ENCODE measurements at regions of chr14 and their contacts with region 1.

Region 1: GRCh38 chr14:103104654-103105452 is 10.3 kb downstream of the EXOC3L4 start:
- DNase-seq: peak; percentile 85
- ATAC-seq: peak; percentile 82
- H3K4me3 Mint-ChIP-seq: no peak overlapping the region
- H3K27ac Mint-ChIP-seq: no peak overlapping the region
- H3K4me1 Mint-ChIP-seq: peaks cover 10% of the 10 kb centered on the region
- H3K27me3 Mint-ChIP-seq: peaks cover 27% of the 10 kb centered on the region

Region 2: DNA sequence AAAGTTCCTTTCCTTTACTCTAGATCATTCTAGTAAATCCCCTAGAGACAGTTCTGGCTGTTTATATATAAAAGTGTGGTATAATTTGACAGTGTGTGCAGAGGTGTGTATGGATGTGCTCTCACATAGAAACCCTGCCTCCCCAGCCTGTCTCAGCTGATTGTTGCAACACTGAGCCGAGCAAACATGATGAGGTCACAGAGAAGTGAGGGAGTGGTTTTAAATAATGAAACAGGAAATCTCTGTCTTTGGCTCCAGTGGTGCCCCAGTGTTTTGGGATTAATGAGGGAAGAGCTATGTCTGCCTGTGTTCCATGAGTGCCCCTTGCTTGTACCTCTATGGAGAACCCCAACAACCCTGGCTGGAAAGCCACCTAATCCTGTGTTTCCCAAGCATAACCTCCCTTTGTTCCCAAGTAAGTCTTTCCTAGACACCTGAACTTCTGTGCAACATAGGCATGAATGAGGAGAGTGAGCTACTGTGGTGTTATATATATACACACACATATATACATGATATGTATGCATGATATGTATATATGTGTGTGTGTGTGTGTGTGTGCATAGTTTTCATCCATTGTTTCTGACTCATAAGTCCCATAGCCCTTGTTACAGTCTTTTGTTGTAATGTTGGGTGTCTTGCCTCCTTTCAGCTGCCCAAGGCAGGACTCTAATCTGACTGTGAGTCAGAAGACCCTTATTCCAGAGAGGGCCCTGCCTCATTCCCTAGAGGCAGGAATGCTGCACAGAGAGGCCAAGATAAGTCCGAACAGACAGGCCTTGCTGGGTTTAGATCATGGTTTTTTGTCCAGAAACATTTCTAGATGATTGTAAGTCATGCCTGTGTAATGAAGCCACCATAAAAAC is 309.6 kb before region 1 on chr14:
- CTCF ChIA-PET with region 1: no interaction called
- POLR2A ChIA-PET with region 1: no interaction called
- intact Hi-C with region 1: no loop called
- DNase-seq: peak; percentile 67
- ATAC-seq: peak; percentile 80
- H3K4me3 Mint-ChIP-seq: no peak overlapping the region
- H3K27ac Mint-ChIP-seq: peak overlapping the region; percentile 72
- H3K4me1 Mint-ChIP-seq: peaks cover 84% of the 10 kb centered on the region
- H3K27me3 Mint-ChIP-seq: no peaks in the 10 kb centered on the region

Region 3: GRCh38 chr14:103091041-103091882 is 13.6 kb before region 1 on chr14:
- CTCF ChIA-PET with region 1: interaction called, 23 read pairs
- POLR2A ChIA-PET with region 1: interaction called, 4 read pairs
- intact Hi-C with region 1: no loop called
- DNase-seq: peak; percentile 88
- ATAC-seq: peak; percentile 91
- H3K4me3 Mint-ChIP-seq: peak overlapping the region; percentile 12
- H3K27ac Mint-ChIP-seq: no peak overlapping the region
- H3K4me1 Mint-ChIP-seq: peaks cover 3% of the 10 kb centered on the region
- H3K27me3 Mint-ChIP-seq: no peaks in the 10 kb centered on the region

Region 4: GRCh38 chr14:103141119-103141796 is 36.4 kb after region 1 on chr14:
- CTCF ChIA-PET with region 1: interaction called, 13 read pairs
- POLR2A ChIA-PET with region 1: no interaction called
- intact Hi-C with region 1: loop called in 1 of 2 experiments (anchors 1 kb)
- DNase-seq: peak; percentile 72
- ATAC-seq: peak; percentile 51
- H3K4me3 Mint-ChIP-seq: no peak overlapping the region
- H3K27ac Mint-ChIP-seq: no peak overlapping the region
- H3K4me1 Mint-ChIP-seq: no peaks in the 10 kb centered on the region
- H3K27me3 Mint-ChIP-seq: peaks cover 35% of the 10 kb centered on the region

Region 5: DNA sequence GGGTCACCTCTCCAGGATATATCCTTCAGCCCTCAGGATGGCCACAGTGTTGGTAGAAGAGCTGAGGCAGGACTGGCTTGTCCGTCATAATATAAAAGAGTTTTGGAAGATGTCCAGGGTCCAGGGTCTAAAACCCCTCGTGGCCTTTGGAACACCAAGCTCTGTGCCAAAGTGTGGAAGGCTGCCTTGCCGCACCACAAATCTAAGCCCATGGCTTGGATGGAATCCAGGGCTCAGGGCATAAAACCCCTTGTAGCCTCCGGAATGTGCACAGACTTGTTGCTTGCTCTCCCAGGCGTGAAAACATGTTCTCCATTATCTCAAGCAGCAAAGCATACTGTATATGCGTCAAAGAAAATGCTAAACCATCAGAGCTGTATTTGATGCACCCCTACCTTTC is 65.1 kb after region 1 on chr14:
- CTCF ChIA-PET with region 1: no interaction called
- POLR2A ChIA-PET with region 1: interaction called, 10 read pairs
- intact Hi-C with region 1: no loop called
- DNase-seq: no peak
- ATAC-seq: no peak
- H3K4me3 Mint-ChIP-seq: no peak overlapping the region
- H3K27ac Mint-ChIP-seq: no peak overlapping the region
- H3K4me1 Mint-ChIP-seq: no peaks in the 10 kb centered on the region
- H3K27me3 Mint-ChIP-seq: peaks cover 16% of the 10 kb centered on the region

Region 6: GRCh38 chr14:103185051-103185992 is 80.5 kb after region 1 on chr14:
- CTCF ChIA-PET with region 1: interaction called, 31 read pairs
- POLR2A ChIA-PET with region 1: no interaction called
- intact Hi-C with region 1: loop called (anchors 1 to 5 kb)
- DNase-seq: no peak
- ATAC-seq: no peak
- H3K4me3 Mint-ChIP-seq: no peak overlapping the region
- H3K27ac Mint-ChIP-seq: no peak overlapping the region
- H3K4me1 Mint-ChIP-seq: peaks cover 3% of the 10 kb centered on the region
- H3K27me3 Mint-ChIP-seq: peaks cover 40% of the 10 kb centered on the region

Region 7: GRCh38 chr14:103241531-103241930 is 136.7 kb after region 1 on chr14:
- CTCF ChIA-PET with region 1: no interaction called
- POLR2A ChIA-PET with region 1: no interaction called
- intact Hi-C with region 1: no loop called
- DNase-seq: no peak
- ATAC-seq: no peak
- H3K4me3 Mint-ChIP-seq: no peak overlapping the region
- H3K27ac Mint-ChIP-seq: no peak overlapping the region
- H3K4me1 Mint-ChIP-seq: no peaks in the 10 kb centered on the region
- H3K27me3 Mint-ChIP-seq: peaks cover 25% of the 10 kb centered on the region

Region 8: GRCh38 chr14:103292426-103293374 is 187.8 kb after region 1 on chr14:
- CTCF ChIA-PET with region 1: interaction called, 23 read pairs
- POLR2A ChIA-PET with region 1: no interaction called
- intact Hi-C with region 1: loop called (anchors 1 to 2 kb)
- DNase-seq: peak; percentile 89
- ATAC-seq: peak; percentile 97
- H3K4me3 Mint-ChIP-seq: no peak overlapping the region
- H3K27ac Mint-ChIP-seq: no peak overlapping the region
- H3K4me1 Mint-ChIP-seq: no peaks in the 10 kb centered on the region
- H3K27me3 Mint-ChIP-seq: peaks cover 9% of the 10 kb centered on the region

Region 9: DNA sequence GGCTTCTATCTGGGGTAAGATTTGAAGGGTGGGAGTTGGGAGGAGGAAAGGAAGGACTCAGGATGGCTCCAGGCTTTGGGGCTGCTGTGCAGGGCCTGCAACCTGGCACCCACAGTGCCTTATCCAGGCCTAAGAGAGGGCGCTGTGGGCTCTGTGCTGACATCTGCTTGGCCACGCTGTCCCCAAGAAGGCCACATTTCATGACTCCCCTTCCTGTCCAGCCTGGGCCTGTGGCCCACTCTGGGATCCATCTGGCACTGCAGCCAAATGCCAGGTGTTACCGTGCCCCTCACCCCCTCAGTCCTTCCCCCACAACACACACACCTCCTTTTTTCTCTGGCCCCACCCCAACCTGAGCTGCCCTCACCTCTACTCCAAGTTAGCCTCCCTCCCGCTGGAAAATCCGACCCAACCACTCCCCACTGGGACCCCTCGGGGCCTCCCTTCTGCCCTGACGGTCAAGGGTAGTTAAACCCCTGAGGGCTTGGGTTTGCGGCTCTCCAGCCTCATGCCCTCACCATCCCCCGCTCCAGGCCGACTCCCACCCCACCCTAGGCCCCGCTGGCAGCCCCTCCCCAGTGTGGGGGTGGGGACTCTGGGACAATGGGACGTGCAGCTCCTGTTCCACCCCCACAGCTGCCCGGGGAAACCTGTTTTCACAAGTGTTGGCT is 750.3 kb after region 1 on chr14:
- CTCF ChIA-PET with region 1: no interaction called
- POLR2A ChIA-PET with region 1: no interaction called
- intact Hi-C with region 1: no loop called
- DNase-seq: no peak
- ATAC-seq: no peak
- H3K4me3 Mint-ChIP-seq: no peak overlapping the region
- H3K27ac Mint-ChIP-seq: no peak overlapping the region
- H3K4me1 Mint-ChIP-seq: peaks cover 7% of the 10 kb centered on the region
- H3K27me3 Mint-ChIP-seq: no peaks in the 10 kb centered on the region